ENCODE measurements at regions of chr16 and their contacts with region 1.

Region 1: DNA sequence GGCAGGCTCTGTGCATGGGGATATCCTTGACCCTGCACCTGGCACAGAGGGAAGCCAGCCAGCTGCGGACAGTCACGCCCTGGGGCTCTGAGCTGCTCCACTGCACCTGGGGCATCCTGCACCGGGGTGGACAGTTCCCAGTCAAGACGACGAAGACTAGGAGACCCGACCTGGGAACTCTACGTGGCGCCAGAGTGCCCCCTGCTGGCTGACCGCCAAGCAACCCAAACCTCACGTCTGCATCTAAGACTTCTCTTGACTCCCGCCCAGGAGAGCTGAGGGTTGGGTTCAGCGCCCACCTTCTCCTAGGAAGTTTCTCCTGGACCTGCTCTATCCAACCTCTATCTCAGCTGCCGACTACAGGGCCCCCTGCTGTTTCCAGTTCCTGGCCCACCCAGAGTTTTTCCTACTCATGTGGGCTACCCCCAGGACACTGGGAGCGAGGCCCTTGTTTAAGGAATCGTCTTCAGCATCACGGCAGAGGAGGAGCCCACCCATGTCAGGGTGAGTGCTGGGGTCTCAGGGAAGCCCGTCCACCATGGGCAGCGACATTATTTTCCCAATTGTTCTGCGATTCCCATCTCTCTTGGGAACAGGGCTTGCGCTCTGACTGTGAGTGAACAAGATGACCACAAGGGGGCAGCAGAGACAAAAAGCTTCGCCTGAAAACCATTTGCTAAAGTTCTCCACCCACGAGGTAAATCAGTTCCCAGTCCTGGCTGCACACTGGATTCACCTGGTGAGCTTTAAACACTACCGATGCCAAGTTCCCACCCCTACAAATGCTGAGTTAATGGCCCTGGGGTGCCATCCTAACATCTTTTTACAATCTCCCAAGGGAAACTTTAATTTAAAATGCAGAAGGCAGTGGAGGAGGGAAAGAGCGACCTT is 29.3 kb downstream of the TLE7 start:
- DNase-seq: peak; percentile 78
- H3K4me3 ChIP-seq: peak overlapping the region in 1 of 2 experiments; percentile 12; a peak in 2 of 4 replicates
- H3K27ac ChIP-seq: no peak overlapping the region
- H3K4me1 ChIP-seq: no peaks in the 10 kb centered on the region; a peak in 1 of 4 replicates
- H3K27me3 ChIP-seq: peaks cover 20% of the 10 kb centered on the region; the same call in 1 of the 2 replicates
- CTCF ChIP-seq: peak; percentile 81
- EP300 ChIP-seq: no peak
- RAD21 ChIP-seq: peak; percentile 77

Region 2: GRCh38 chr16:71328151-71328550 is 84.4 kb before region 1 on chr16:
- CTCF ChIA-PET with region 1: no interaction called
- POLR2A ChIA-PET with region 1: no interaction called
- DNase-seq: no peak
- H3K4me3 ChIP-seq: no peak overlapping the region
- H3K27ac ChIP-seq: no peak overlapping the region
- H3K4me1 ChIP-seq: no peaks in the 10 kb centered on the region
- H3K27me3 ChIP-seq: no peaks in the 10 kb centered on the region
- CTCF ChIP-seq: no peak
- EP300 ChIP-seq: no peak
- RAD21 ChIP-seq: no peak

Region 3: GRCh38 chr16:71367241-71367976 is 45.1 kb before region 1 on chr16:
- CTCF ChIA-PET with region 1: interaction called, 12 read pairs
- POLR2A ChIA-PET with region 1: no interaction called
- DNase-seq: peak; percentile 82
- H3K4me3 ChIP-seq: peak overlapping the region in 1 of 2 experiments; percentile 37; a peak in 1 of 4 replicates
- H3K27ac ChIP-seq: no peak overlapping the region
- H3K4me1 ChIP-seq: peaks cover 0 to 3% of the 10 kb centered on the region in 2 experiments; a peak in 1 of 4 replicates
- H3K27me3 ChIP-seq: no peaks in the 10 kb centered on the region; the same call in 1 of the 2 replicates
- CTCF ChIP-seq: peak; percentile 70
- EP300 ChIP-seq: no peak
- RAD21 ChIP-seq: peak; percentile 62

Region 4: DNA sequence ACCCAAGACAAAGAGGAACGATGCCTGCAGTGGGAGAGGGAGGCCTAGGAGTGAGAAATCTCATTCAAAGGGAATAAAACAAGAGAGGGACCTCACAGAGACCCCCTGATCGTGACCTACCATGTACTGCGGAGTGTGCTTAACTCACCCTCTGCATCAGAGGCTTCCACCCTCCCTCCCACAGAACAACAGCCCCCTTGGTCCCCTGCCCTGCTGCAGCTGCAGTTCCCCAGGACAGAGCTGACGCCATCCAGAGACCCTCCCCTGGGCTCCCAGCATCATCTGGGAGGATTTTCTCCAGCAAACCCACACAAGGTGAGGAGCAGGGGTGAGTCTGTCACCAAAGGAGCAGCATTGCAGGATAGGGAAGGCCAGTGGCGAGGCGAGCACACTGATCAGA is 10.5 kb before region 1 on chr16:
- CTCF ChIA-PET with region 1: interaction called, 18 read pairs
- POLR2A ChIA-PET with region 1: no interaction called
- DNase-seq: no peak
- H3K4me3 ChIP-seq: no peak overlapping the region
- H3K27ac ChIP-seq: no peak overlapping the region
- H3K4me1 ChIP-seq: no peaks in the 10 kb centered on the region
- H3K27me3 ChIP-seq: peaks cover 18% of the 10 kb centered on the region
- CTCF ChIP-seq: no peak
- EP300 ChIP-seq: no peak
- RAD21 ChIP-seq: no peak

Region 5: GRCh38 chr16:71440669-71441347 is 28.3 kb after region 1 on chr16:
- CTCF ChIA-PET with region 1: interaction called, 25 read pairs
- POLR2A ChIA-PET with region 1: no interaction called
- DNase-seq: peak; percentile 57
- H3K4me3 ChIP-seq: no peak overlapping the region
- H3K27ac ChIP-seq: no peak overlapping the region
- H3K4me1 ChIP-seq: no peaks in the 10 kb centered on the region
- H3K27me3 ChIP-seq: peaks cover 8% of the 10 kb centered on the region; the same call in 1 of the 2 replicates
- CTCF ChIP-seq: peak; percentile 25; the same call in 1 of the 2 replicates
- EP300 ChIP-seq: no peak
- RAD21 ChIP-seq: no peak

Region 6: DNA sequence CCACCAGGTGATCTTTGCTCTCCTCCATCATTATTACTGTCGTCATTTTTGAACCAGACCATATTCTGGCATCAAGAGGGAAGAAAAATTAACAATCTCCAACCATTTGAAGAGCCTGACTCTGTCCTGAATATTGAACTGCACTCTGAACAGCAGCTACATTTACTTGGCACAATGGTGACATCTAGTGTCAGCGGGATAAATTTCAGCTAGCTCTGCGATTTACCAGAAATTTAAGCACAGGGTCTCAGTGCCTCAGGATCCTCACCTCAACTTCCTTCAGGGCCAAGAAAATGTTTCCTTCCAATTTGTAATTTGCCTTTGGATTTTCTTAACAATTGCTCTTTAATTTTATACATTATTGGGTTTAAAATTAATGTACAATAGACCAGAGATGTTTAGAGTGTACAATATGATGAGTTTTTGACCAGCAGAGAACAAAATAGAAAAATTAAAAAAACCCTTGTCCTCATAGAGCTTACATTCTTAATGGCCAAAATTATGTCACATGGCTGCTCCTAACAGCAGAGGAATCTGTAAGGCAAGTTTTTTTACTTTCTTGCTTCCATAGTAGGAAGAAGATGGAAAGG is 87.4 kb after region 1 on chr16:
- CTCF ChIA-PET with region 1: interaction called, 162 read pairs
- POLR2A ChIA-PET with region 1: interaction called, 9 read pairs
- DNase-seq: peak; percentile 66
- H3K4me3 ChIP-seq: no peak overlapping the region
- H3K27ac ChIP-seq: no peak overlapping the region
- H3K4me1 ChIP-seq: no peaks in the 10 kb centered on the region
- H3K27me3 ChIP-seq: no peaks in the 10 kb centered on the region; the same call in 1 of the 2 replicates
- CTCF ChIP-seq: peak; percentile 77
- EP300 ChIP-seq: no peak
- RAD21 ChIP-seq: peak; percentile 91

Region 7: GRCh38 chr16:71537643-71538042 is 125.1 kb after region 1 on chr16:
- CTCF ChIA-PET with region 1: interaction called, 19 read pairs
- POLR2A ChIA-PET with region 1: no interaction called
- DNase-seq: peak; percentile 36
- H3K4me3 ChIP-seq: no peak overlapping the region; a peak in 1 of 4 replicates
- H3K27ac ChIP-seq: no peak overlapping the region
- H3K4me1 ChIP-seq: no peaks in the 10 kb centered on the region
- H3K27me3 ChIP-seq: no peaks in the 10 kb centered on the region
- CTCF ChIP-seq: peak; percentile 59
- EP300 ChIP-seq: no peak
- RAD21 ChIP-seq: peak; percentile 58

Region 8: GRCh38 chr16:71658771-71659170 is 246.3 kb after region 1 on chr16:
- CTCF ChIA-PET with region 1: no interaction called
- POLR2A ChIA-PET with region 1: no interaction called
- DNase-seq: no peak
- H3K4me3 ChIP-seq: no peak overlapping the region
- H3K27ac ChIP-seq: no peak overlapping the region
- H3K4me1 ChIP-seq: no peaks in the 10 kb centered on the region
- H3K27me3 ChIP-seq: no peaks in the 10 kb centered on the region
- CTCF ChIP-seq: no peak
- EP300 ChIP-seq: no peak
- RAD21 ChIP-seq: no peak